Spleen (tissue), 13 donors: ENCODE measurements at regions of chr7 and their contacts with region 1.

Region 1: DNA sequence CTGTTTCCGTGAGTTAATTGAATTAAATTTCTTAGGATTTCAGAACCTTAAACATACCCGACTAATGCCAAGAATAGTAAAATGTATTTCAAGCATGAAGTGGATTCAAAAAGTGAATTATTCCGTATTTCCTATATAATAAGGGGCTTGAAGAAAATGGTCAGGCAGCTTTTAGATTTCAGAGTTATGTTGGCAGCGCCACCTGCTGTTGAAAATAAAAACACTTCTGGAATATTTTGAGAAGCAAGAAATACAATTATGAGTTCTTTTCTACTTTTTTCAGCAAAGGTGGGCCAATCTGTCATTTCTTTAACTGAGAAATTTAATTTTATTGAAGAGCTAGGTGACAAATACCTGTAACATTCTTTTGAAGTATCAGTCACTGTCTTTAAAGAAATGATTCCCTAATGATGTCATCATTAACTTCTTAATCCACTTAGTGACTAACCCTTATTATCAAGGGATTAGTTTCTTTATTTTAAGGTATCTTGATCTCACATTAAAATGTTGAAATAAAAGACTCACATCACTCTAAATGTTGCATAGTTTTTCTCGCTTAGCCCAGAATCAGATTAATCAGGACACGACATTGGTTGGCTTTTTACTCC is 36.6 kb upstream of the AGR3 start:
- DNase-seq: no peak
- H3K4me3 ChIP-seq: no peak overlapping the region
- H3K27ac ChIP-seq: no peak overlapping the region
- H3K4me1 ChIP-seq: no peaks in the 10 kb centered on the region
- H3K27me3 ChIP-seq: no peaks in the 10 kb centered on the region
- CTCF ChIP-seq: peak; percentile 9 to 74 (median 58)
- POLR2A ChIP-seq: no peak

Region 2: DNA sequence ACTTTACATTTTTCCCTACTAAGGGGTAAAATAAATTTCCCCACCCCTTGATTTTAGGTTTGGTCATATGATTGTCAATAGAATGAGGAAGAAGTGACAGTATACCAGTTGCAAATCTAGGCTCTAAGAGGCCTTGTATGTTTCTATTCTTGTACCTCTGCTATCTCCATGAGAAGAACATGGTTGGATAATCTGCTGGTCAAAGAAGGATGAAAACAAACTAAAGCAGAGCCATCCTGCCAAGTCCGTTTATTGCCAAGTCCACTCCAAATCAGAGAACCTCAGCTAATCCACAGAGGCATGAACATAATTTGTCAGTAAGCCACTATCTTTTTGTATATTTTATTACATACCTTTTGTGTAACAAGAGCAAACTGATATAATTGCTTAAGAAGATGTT is 595.1 kb before region 1 on chr7:
- intact Hi-C with region 1: no loop called
- DNase-seq: no peak
- H3K4me3 ChIP-seq: no peak overlapping the region
- H3K27ac ChIP-seq: no peak overlapping the region
- H3K4me1 ChIP-seq: no peaks in the 10 kb centered on the region
- H3K27me3 ChIP-seq: no peaks in the 10 kb centered on the region
- CTCF ChIP-seq: no peak
- POLR2A ChIP-seq: no peak

Region 3: GRCh38 chr7:16695621-16696237 is 222.7 kb before region 1 on chr7:
- intact Hi-C with region 1: loop called (anchors 10 kb)
- DNase-seq: no peak
- H3K4me3 ChIP-seq: no peak overlapping the region
- H3K27ac ChIP-seq: no peak overlapping the region
- H3K4me1 ChIP-seq: no peaks in the 10 kb centered on the region
- H3K27me3 ChIP-seq: no peaks in the 10 kb centered on the region
- CTCF ChIP-seq: peak in 9 of 11 experiments; percentile 20 to 64 (median 51)
- POLR2A ChIP-seq: no peak

Region 4: GRCh38 chr7:16801111-16801542 is 117.3 kb before region 1 on chr7:
- intact Hi-C with region 1: loop called (anchors 10 kb)
- DNase-seq: no peak
- H3K4me3 ChIP-seq: no peak overlapping the region
- H3K27ac ChIP-seq: no peak overlapping the region
- H3K4me1 ChIP-seq: no peaks in the 10 kb centered on the region
- H3K27me3 ChIP-seq: no peaks in the 10 kb centered on the region
- CTCF ChIP-seq: peak in 7 of 11 experiments; percentile 9 to 35 (median 30)
- POLR2A ChIP-seq: no peak